HCT116 (cell line): ENCODE measurements at regions of chr16 and their contacts with region 1.

Region 1: GRCh38 chr16:80273635-80274538 is 266.9 kb upstream of the DYNLRB2 start:
- DNase-seq: no peak
- ATAC-seq: no peak
- H3K4me3 ChIP-seq: no peak overlapping the region
- H3K27ac ChIP-seq: no peak overlapping the region
- H3K4me1 ChIP-seq: no peaks in the 10 kb centered on the region
- H3K27me3 ChIP-seq: no peaks in the 10 kb centered on the region
- CTCF ChIP-seq: no peak
- POLR2A ChIP-seq: no peak
- RAD21 ChIP-seq: no peak

Region 2: GRCh38 chr16:80288616-80289015 is 14.7 kb after region 1 on chr16:
- CTCF ChIA-PET with region 1: no interaction called
- POLR2A ChIA-PET with region 1: no interaction called
- RAD21 ChIA-PET with region 1: no interaction called
- intact Hi-C with region 1: loop called (anchors 2 kb)
- DNase-seq: no peak
- ATAC-seq: no peak
- H3K4me3 ChIP-seq: no peak overlapping the region
- H3K27ac ChIP-seq: no peak overlapping the region
- H3K4me1 ChIP-seq: no peaks in the 10 kb centered on the region
- H3K27me3 ChIP-seq: no peaks in the 10 kb centered on the region
- CTCF ChIP-seq: no peak
- POLR2A ChIP-seq: no peak
- RAD21 ChIP-seq: no peak